Mammary epithelial cell (primary cell): ENCODE measurements at regions of chr2 and their contacts with region 1.

Region 1: GRCh38 chr2:19989681-19990415 is at the start of gene WDR35:
- DNase-seq: peak; percentile 88
- H3K4me3 ChIP-seq: peak within 1 kb of the TSS; percentile 67 to 91 (median 75)
- H3K27ac ChIP-seq: peak within 1 kb of the TSS; percentile 45
- H3K4me1 ChIP-seq: peaks cover 9% of the 10 kb centered on the region
- H3K27me3 ChIP-seq: no peaks in the 10 kb centered on the region
- CTCF ChIP-seq: no peak
- total RNA-seq, gene WDR35: 8.8 to 11.5 TPM

Region 2: GRCh38 chr2:19933351-19933981 is 56.4 kb before region 1 on chr2:
- CTCF ChIA-PET with region 1: no interaction called
- dilution Hi-C with region 1: no loop called
- in situ Hi-C with region 1: no loop called
- intact Hi-C with region 1: no loop called
- DNase-seq: peak; percentile 56
- H3K4me3 ChIP-seq: peak overlapping the region in 1 of 3 experiments; percentile 10
- H3K27ac ChIP-seq: peak overlapping the region; percentile 71
- H3K4me1 ChIP-seq: peaks cover 11% of the 10 kb centered on the region
- H3K27me3 ChIP-seq: no peaks in the 10 kb centered on the region
- CTCF ChIP-seq: no peak

Region 3: DNA sequence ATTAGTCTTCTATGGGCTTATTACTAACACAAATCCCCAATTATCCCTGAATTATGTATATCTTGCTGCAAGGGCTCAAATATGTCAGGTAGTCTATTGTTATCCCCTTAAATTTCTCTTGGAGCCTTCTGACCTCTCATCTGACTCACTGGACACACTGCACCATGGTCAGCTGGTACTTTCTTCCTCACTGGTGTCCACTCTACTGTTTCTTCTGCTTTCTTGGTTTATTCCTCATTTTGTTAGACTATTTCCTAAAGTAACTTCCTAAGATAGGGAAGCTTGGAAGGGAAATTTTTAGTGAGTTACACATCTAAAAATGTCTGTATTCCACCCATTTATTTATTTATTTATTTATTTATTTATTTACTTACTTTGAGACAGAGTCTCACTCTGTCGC is 26.5 kb before region 1 on chr2:
- CTCF ChIA-PET with region 1: no interaction called
- dilution Hi-C with region 1: no loop called
- in situ Hi-C with region 1: no loop called
- intact Hi-C with region 1: loop called (anchors 2 kb)
- DNase-seq: no peak
- H3K4me3 ChIP-seq: no peak overlapping the region
- H3K27ac ChIP-seq: no peak overlapping the region
- H3K4me1 ChIP-seq: no peaks in the 10 kb centered on the region
- H3K27me3 ChIP-seq: no peaks in the 10 kb centered on the region
- CTCF ChIP-seq: no peak

Region 4: GRCh38 chr2:20021405-20022009 is 31.7 kb after region 1 on chr2:
- CTCF ChIA-PET with region 1: no interaction called
- dilution Hi-C with region 1: no loop called
- in situ Hi-C with region 1: no loop called
- intact Hi-C with region 1: no loop called
- DNase-seq: no peak
- H3K4me3 ChIP-seq: no peak overlapping the region
- H3K27ac ChIP-seq: no peak overlapping the region
- H3K4me1 ChIP-seq: peaks cover under 1% of the 10 kb centered on the region
- H3K27me3 ChIP-seq: no peaks in the 10 kb centered on the region
- CTCF ChIP-seq: no peak